ENCODE measurements at regions of chr14 and their contacts with region 1.

Region 1: DNA sequence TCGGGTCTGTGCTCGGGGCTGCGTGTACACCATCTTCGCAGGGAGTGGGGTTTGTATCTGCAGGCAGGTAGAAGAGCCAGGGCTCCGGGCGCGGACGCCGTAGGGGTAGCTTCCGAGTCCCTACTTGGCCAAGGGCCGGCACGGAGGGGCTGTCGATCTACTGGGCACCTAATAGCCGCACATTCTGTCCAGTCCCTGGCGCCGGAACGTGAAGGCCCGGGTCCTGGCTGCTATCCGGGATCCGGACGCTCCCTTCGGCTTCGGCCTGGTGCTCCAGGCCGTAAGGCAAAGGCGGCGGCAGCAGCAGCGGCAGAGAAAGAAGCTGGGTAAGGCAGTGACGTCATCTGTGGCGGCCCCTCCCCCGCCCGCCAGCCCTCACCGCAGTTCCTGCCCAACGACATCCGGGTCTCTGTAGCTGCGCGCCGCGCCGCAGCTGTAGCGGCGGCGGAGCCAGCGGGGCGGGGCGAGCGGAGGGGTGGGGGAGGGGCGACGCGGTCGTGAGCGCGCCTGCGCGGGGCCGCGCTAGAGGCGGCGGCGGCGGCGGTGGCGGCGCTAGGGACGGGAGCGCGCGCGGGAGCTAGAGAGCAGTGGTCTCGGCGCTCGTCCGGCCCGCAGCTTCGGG is at the start of gene PPM1A:
- DNase-seq: peak; percentile 94 to 99 (median 96)
- ATAC-seq: peak; percentile 71
- H3K4me3 ChIP-seq: peak within 1 kb of the TSS; percentile 92
- H3K4me3 Mint-ChIP-seq: peak within 1 kb of the TSS; percentile 96
- H3K27ac ChIP-seq: peak within 1 kb of the TSS; percentile 100
- H3K27ac Mint-ChIP-seq: peak within 1 kb of the TSS; percentile 97
- H3K4me1 ChIP-seq: peaks cover 23% of the 10 kb centered on the region
- H3K4me1 Mint-ChIP-seq: peaks cover 53% of the 10 kb centered on the region
- H3K27me3 ChIP-seq: no peaks in the 10 kb centered on the region
- H3K27me3 Mint-ChIP-seq: no peaks in the 10 kb centered on the region
- CTCF ChIP-seq: no peak
- total RNA-seq, gene PPM1A: 96.9 to 97.2 TPM

Region 2: GRCh38 chr14:59189786-59190771 is 1058.7 kb before region 1 on chr14:
- CTCF ChIA-PET with region 1: no interaction called
- POLR2A ChIA-PET with region 1: interaction called, 16 read pairs
- intact Hi-C with region 1: loop called in 1 of 2 experiments (anchors 5 kb)
- DNase-seq: peak; percentile 28 to 91 (median 56)
- ATAC-seq: no peak
- H3K4me3 ChIP-seq: peak overlapping the region; percentile 83
- H3K4me3 Mint-ChIP-seq: peak overlapping the region; percentile 99
- H3K27ac ChIP-seq: peak overlapping the region; percentile 84 to 87
- H3K27ac Mint-ChIP-seq: peak overlapping the region; percentile 94
- H3K4me1 ChIP-seq: peaks cover 20% of the 10 kb centered on the region
- H3K4me1 Mint-ChIP-seq: peaks cover 29% of the 10 kb centered on the region
- H3K27me3 ChIP-seq: no peaks in the 10 kb centered on the region
- H3K27me3 Mint-ChIP-seq: no peaks in the 10 kb centered on the region
- CTCF ChIP-seq: no peak

Region 3: DNA sequence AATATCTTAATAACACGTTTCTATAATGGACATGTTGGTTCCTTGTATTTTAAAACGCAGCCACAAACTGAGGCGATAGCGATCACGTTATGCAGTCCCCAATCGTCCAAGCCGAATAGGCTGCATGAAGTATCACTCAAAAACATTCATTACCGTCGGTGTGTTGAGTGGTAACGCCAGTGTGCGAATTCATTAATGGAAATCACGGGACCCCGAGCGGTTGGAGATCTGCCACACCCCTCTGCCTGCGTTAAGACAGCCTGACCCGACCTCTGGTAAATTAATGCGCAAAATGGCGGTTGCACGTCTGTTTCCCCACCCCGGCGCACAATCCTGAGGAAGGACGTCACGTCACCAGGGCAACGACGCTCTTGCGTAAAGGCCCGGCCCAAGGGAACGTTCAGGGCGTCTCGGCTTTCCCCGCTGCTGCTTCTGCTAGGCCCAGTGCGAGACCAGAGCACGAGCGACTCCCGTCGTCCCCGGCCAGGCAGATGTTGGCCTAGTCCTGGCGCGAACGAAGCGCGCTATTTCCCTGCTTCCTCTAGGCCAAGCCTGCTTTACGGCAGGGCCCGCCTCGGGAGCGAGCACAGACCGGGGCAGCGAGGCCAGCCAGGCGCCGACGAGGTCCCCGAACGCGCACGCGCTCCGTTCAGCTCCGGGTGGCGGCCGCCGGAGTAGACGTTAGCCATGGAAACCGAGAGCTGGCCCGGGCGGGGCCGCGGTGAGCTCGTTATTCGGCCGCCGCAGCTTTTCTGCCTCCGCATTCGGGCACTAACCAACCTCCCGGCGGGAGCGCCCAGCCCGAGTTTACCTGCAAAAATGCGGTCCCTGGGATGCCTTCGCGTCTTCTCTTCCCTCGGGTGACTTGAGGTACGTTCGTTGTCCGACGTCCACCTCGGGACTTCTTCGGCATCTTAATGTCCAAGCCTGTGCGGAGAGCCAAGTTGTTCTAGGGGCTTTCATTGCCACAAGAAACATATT is 157.0 kb before region 1 on chr14 and contains the start of gene PCNX4:
- CTCF ChIA-PET with region 1: interaction called, 3 read pairs
- POLR2A ChIA-PET with region 1: interaction called, 76 read pairs
- intact Hi-C with region 1: loop called (anchors 1 to 2 kb)
- DNase-seq: peak; percentile 88 to 99 (median 92)
- ATAC-seq: peak; percentile 92
- H3K4me3 ChIP-seq: peak within 1 kb of the TSS; percentile 89
- H3K4me3 Mint-ChIP-seq: peak within 1 kb of the TSS; percentile 96
- H3K27ac ChIP-seq: peak within 1 kb of the TSS; percentile 94 to 98
- H3K27ac Mint-ChIP-seq: peak within 1 kb of the TSS; percentile 99
- H3K4me1 ChIP-seq: peaks cover 21% of the 10 kb centered on the region
- H3K4me1 Mint-ChIP-seq: peaks cover 51% of the 10 kb centered on the region
- H3K27me3 ChIP-seq: no peaks in the 10 kb centered on the region
- H3K27me3 Mint-ChIP-seq: no peaks in the 10 kb centered on the region
- CTCF ChIP-seq: no peak
- total RNA-seq, gene PCNX4: 17.3 to 21.0 TPM

Region 4: GRCh38 chr14:60184146-60184904 is 64.5 kb before region 1 on chr14:
- CTCF ChIA-PET with region 1: interaction called, 3 read pairs
- POLR2A ChIA-PET with region 1: interaction called, 35 read pairs
- intact Hi-C with region 1: loop called (anchors 2 to 5 kb)
- DNase-seq: peak in 6 of 14 experiments; percentile 9 to 87 (median 62)
- ATAC-seq: peak; percentile 71
- H3K4me3 ChIP-seq: peak overlapping the region; percentile 52
- H3K4me3 Mint-ChIP-seq: peak overlapping the region; percentile 75
- H3K27ac ChIP-seq: peak overlapping the region in 1 of 2 donors; percentile 74
- H3K27ac Mint-ChIP-seq: peak overlapping the region; percentile 74
- H3K4me1 ChIP-seq: peaks cover 4% of the 10 kb centered on the region
- H3K4me1 Mint-ChIP-seq: peaks cover 11% of the 10 kb centered on the region
- H3K27me3 ChIP-seq: no peaks in the 10 kb centered on the region
- H3K27me3 Mint-ChIP-seq: no peaks in the 10 kb centered on the region
- CTCF ChIP-seq: peak; percentile 89

Region 5: DNA sequence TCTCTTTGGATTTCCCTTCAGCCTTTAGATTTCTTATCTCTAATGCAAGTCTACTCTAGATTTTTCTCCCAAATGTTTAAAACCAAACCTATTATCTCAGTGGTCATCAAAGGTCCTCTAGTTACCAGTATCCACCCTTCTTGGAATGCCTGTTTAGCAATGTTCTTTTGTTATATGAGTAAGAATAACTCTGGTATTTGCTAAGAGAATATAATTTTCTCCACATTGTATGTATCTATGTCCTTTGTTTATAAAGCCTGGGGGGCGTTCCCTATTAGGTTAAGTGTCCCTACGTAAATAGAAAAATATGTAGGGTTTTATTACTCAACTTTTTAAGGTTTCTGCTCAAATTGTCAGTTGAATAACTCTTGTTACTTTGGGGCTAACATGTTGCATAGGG is 27.5 kb after region 1 on chr14:
- CTCF ChIA-PET with region 1: no interaction called
- POLR2A ChIA-PET with region 1: interaction called, 14 read pairs
- intact Hi-C with region 1: no loop called
- DNase-seq: no peak
- ATAC-seq: no peak
- H3K4me3 ChIP-seq: no peak overlapping the region
- H3K4me3 Mint-ChIP-seq: no peak overlapping the region
- H3K27ac ChIP-seq: no peak overlapping the region
- H3K27ac Mint-ChIP-seq: no peak overlapping the region
- H3K4me1 ChIP-seq: peaks cover 11% of the 10 kb centered on the region
- H3K4me1 Mint-ChIP-seq: peaks cover 82% of the 10 kb centered on the region
- H3K27me3 ChIP-seq: no peaks in the 10 kb centered on the region
- H3K27me3 Mint-ChIP-seq: no peaks in the 10 kb centered on the region
- CTCF ChIP-seq: no peak

Region 6: GRCh38 chr14:60980811-60981632 is 732.2 kb after region 1 on chr14 and contains the starts of genes SLC38A6 and TRMT5:
- CTCF ChIA-PET with region 1: no interaction called
- POLR2A ChIA-PET with region 1: interaction called, 15 read pairs
- intact Hi-C with region 1: loop called (anchors 5 to 10 kb)
- DNase-seq: peak; percentile 80 to 95 (median 87)
- ATAC-seq: peak; percentile 88
- H3K4me3 ChIP-seq: peak within 1 kb of the TSS; percentile 75
- H3K4me3 Mint-ChIP-seq: no peak within 1 kb of the TSS
- H3K27ac ChIP-seq: peak within 1 kb of the TSS; percentile 79 to 83
- H3K27ac Mint-ChIP-seq: no peak within 1 kb of the TSS
- H3K4me1 ChIP-seq: peaks cover 17% of the 10 kb centered on the region
- H3K4me1 Mint-ChIP-seq: peaks cover 31% of the 10 kb centered on the region
- H3K27me3 ChIP-seq: no peaks in the 10 kb centered on the region
- H3K27me3 Mint-ChIP-seq: no peaks in the 10 kb centered on the region
- CTCF ChIP-seq: no peak
- total RNA-seq, gene SLC38A6: 9.4 to 10.0 TPM
- total RNA-seq, gene TRMT5: 3.6 to 3.8 TPM